Natural killer cell (primary cell): ENCODE measurements at regions of chr5 and their contacts with region 1.

Region 1: DNA sequence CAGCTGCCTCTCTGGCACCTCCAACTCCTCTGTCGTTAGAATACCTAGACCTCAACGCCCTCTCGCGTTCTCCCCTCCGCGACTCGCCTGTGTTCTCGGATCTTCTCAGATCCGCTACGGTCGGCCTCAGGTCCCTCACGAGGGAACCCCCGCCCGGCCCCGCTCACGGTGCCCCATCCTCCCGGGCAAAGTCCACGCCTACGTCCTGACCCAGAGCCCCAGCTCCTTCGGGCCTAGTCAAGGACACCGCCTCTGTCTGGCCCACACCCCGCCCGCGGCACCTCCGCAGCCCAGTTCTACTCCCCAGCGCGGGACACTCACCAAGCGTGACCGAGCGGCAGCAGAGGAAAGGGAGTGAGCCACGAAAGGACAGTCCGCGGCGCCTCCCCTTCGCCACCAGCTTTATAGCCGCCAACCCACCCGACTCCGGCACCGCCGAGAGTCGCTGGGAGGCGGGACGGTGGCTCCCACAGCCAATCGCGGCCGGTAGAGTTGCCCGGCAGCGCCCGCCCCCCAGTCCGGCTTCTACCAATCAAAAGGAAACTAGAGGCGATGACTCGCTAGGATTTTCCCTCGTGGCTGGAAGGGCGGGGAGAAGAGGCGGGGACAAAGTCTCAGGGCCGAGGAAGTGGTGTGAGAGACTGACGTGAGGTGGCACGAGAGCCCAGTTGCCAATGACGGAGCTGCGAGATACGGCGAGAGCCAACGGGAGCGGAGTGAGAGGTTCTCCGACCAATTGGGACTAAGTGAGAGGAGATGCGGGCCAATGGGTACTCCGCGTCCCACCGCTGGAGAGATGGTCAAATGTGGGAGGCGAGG is at the start of gene HMGCS1:
- DNase-seq: peak; percentile 99
- ATAC-seq: peak; percentile 86 to 95 (median 86)
- H3K4me3 ChIP-seq: peak within 1 kb of the TSS; percentile 82
- H3K4me3 Mint-ChIP-seq: peak within 1 kb of the TSS; percentile 94
- H3K27ac ChIP-seq: peak within 1 kb of the TSS; percentile 98
- H3K27ac Mint-ChIP-seq: peak within 1 kb of the TSS; percentile 98 to 99
- H3K4me1 ChIP-seq: peaks cover 17% of the 10 kb centered on the region
- H3K4me1 Mint-ChIP-seq: peaks cover 32 to 37% of the 10 kb centered on the region in 2 donors
- H3K27me3 ChIP-seq: no peaks in the 10 kb centered on the region
- H3K27me3 Mint-ChIP-seq: peaks cover 0 to 3% of the 10 kb centered on the region in 2 donors
- CTCF ChIP-seq: no peak
- total RNA-seq, gene HMGCS1: 53.0 to 105 (median 85.8) TPM

Region 2: DNA sequence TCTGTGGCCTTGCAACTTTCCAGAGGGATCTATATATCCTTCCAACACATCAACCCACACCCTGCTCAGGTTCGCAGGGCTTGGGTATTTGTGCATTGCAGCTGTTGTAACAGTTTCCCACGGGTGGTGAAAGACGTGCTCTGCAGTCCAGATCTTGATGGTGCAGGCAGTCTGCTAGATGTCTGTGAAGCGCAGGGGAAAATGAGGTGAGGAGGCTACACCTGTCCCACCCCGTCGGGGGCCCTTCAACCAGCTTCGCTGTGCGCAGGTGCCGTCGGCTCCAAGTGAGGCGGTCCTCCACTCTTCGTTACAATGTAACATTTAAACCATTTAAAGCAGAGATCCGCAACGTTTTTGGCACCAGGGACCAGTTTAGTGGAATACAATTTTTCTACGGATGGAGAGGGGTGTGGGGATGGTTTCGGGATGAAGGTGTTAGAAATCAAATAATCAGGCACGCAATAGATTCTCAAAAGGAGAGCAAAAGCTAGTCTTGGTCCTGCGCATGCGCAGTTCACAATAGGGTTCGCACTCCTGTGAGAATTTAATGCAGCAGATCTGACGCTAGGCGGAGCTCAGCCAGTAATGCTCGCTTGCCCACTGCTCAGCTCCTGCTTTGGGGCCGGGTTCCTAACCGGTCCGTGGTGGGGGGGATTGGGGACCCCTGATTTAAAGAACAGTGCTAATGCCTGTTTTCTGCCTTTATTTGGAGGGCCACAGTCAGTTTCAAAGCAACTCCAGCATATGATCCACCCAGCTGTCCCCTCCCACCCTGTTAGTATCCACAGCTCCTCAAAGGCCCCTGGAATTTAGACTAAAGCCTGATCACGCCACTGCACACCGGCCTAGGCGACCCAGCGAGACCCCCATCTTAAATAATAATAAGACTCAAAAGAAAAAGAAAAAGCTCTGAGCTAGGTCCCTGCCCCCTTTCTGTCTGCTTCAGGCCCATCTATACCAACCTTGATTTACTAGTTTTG is 404.4 kb before region 1 on chr5:
- intact Hi-C with region 1: loop called (anchors 5 kb)
- DNase-seq: peak; percentile 83 to 98
- ATAC-seq: peak; percentile 84 to 95 (median 93)
- H3K4me3 ChIP-seq: peak overlapping the region; percentile 67
- H3K4me3 Mint-ChIP-seq: peak overlapping the region; percentile 96
- H3K27ac ChIP-seq: peak overlapping the region; percentile 41
- H3K27ac Mint-ChIP-seq: peak overlapping the region; percentile 86 to 90
- H3K4me1 ChIP-seq: peaks cover 8% of the 10 kb centered on the region
- H3K4me1 Mint-ChIP-seq: peaks cover 8 to 14% of the 10 kb centered on the region in 2 donors
- H3K27me3 ChIP-seq: no peaks in the 10 kb centered on the region
- H3K27me3 Mint-ChIP-seq: peaks cover 15 to 26% of the 10 kb centered on the region in 2 donors
- CTCF ChIP-seq: peak; percentile 81

Region 3: GRCh38 chr5:43105369-43106289 is 207.6 kb before region 1 on chr5:
- intact Hi-C with region 1: loop called (anchors 2 kb)
- DNase-seq: peak; percentile 87 to 98
- ATAC-seq: peak; percentile 92 to 99 (median 94)
- H3K4me3 ChIP-seq: peak overlapping the region; percentile 35
- H3K4me3 Mint-ChIP-seq: peak overlapping the region; percentile 88
- H3K27ac ChIP-seq: peak overlapping the region; percentile 64
- H3K27ac Mint-ChIP-seq: peak overlapping the region; percentile 87 to 91
- H3K4me1 ChIP-seq: peaks cover 16% of the 10 kb centered on the region
- H3K4me1 Mint-ChIP-seq: peaks cover 12 to 25% of the 10 kb centered on the region in 2 donors
- H3K27me3 ChIP-seq: no peaks in the 10 kb centered on the region
- H3K27me3 Mint-ChIP-seq: no peaks in the 10 kb centered on the region
- CTCF ChIP-seq: peak; percentile 100

Region 4: GRCh38 chr5:43191740-43192557 is 121.3 kb before region 1 on chr5 and contains the start of gene NIM1K:
- intact Hi-C with region 1: loop called (anchors 1 kb)
- DNase-seq: peak; percentile 30 to 53
- ATAC-seq: peak; percentile 61 to 70 (median 69)
- H3K4me3 ChIP-seq: peak within 1 kb of the TSS; percentile 24
- H3K4me3 Mint-ChIP-seq: peak within 1 kb of the TSS; percentile 83
- H3K27ac ChIP-seq: no peak within 1 kb of the TSS
- H3K27ac Mint-ChIP-seq: peak within 1 kb of the TSS; percentile 0 to 72
- H3K4me1 ChIP-seq: peaks cover 20% of the 10 kb centered on the region
- H3K4me1 Mint-ChIP-seq: peaks cover 26 to 34% of the 10 kb centered on the region in 2 donors
- H3K27me3 ChIP-seq: peaks cover 3% of the 10 kb centered on the region
- H3K27me3 Mint-ChIP-seq: peaks cover 0 to 15% of the 10 kb centered on the region in 2 donors
- CTCF ChIP-seq: no peak
- total RNA-seq, gene NIM1K: 0.28 to 0.40 (median 0.36) TPM

Region 5: DNA sequence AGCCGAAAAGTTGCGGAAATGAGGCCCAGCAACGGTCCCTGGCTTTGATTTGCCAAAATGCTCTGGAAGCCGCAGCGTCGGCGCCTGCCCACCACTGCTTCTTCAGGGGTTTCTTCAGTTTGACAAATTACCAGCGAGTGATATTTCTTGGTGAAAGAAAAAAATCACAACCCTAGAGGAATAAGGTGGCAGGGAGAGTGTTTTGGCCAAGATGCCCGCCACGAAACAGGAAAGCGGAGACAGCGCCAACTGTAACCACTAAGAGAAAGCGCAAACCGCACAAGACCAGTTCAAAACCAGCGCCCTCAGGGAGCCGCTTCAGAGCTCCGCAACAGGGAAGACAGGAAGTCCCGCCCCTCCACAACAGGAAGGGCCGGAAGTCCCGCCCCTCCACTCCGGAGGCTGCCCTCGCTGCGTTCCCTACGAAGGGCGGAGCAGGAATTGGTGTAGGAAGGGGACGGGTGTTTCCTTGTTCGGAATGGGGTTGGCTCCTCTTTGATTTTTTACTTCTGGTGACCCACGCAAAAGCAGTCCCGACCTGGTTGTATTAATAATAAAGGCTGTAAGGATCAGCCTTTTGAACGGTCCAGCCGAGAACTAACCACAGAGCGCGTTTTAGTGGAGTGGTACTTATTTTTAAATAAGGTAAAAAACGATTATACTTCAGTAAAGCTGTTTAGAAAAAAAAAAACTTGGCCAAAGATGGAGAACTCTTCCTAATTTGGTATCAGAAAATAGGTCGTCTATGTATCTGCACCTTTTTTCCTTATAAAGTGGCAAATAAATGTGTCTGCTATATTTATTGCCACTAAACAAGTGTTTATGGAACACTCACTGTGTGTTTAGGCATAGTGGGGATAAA is 201.8 kb after region 1 on chr5 and contains the start of gene C5orf34:
- intact Hi-C with region 1: loop called (anchors 1 kb)
- DNase-seq: peak; percentile 90 to 97
- ATAC-seq: peak; percentile 94 to 98 (median 95)
- H3K4me3 ChIP-seq: peak within 1 kb of the TSS; percentile 83
- H3K4me3 Mint-ChIP-seq: peak within 1 kb of the TSS; percentile 92
- H3K27ac ChIP-seq: peak within 1 kb of the TSS; percentile 91
- H3K27ac Mint-ChIP-seq: peak within 1 kb of the TSS; percentile 91 to 93
- H3K4me1 ChIP-seq: peaks cover 4% of the 10 kb centered on the region
- H3K4me1 Mint-ChIP-seq: peaks cover 24 to 31% of the 10 kb centered on the region in 2 donors
- H3K27me3 ChIP-seq: no peaks in the 10 kb centered on the region
- H3K27me3 Mint-ChIP-seq: peaks cover 0 to 5% of the 10 kb centered on the region in 2 donors
- CTCF ChIP-seq: no peak
- total RNA-seq, gene C5orf34: 1.1 to 1.8 (median 1.3) TPM

Region 6: GRCh38 chr5:43638546-43638945 is 325.3 kb after region 1 on chr5:
- intact Hi-C with region 1: no loop called
- DNase-seq: no peak
- ATAC-seq: no peak
- H3K4me3 ChIP-seq: no peak overlapping the region
- H3K4me3 Mint-ChIP-seq: no peak overlapping the region
- H3K27ac ChIP-seq: no peak overlapping the region
- H3K27ac Mint-ChIP-seq: no peak overlapping the region
- H3K4me1 ChIP-seq: no peaks in the 10 kb centered on the region
- H3K4me1 Mint-ChIP-seq: peaks cover 26 to 41% of the 10 kb centered on the region in 2 donors
- H3K27me3 ChIP-seq: no peaks in the 10 kb centered on the region
- H3K27me3 Mint-ChIP-seq: no peaks in the 10 kb centered on the region
- CTCF ChIP-seq: no peak